ENCODE measurements at regions of chr3 and their contacts with region 1.

Region 1: DNA sequence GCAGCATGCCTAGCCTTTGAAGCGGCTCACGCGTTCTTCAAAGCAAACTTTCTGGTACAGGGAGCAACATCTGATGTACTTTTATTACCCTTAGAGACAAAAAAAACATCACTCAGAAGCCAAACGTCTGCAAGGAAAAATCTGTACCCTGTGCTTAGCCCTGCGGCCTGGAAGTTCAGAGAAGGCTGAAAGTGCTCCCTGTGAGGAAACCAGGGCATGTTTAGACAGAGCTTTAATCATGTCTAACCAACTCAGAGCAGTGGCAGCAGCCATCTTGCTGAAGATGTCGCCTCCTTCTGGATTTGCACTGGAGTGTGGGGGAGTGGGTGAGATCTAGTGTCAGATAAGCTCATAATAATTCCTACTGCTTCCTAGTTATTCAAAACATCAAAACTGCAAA is 170.4 kb downstream of the P3H2 start:
- DNase-seq: no peak
- ATAC-seq: no peak
- H3K4me3 ChIP-seq: no peak overlapping the region
- H3K27ac ChIP-seq: no peak overlapping the region
- H3K4me1 ChIP-seq: peaks cover 0 to 4% (median 0%) of the 10 kb centered on the region in 3 donors
- H3K27me3 ChIP-seq: no peaks in the 10 kb centered on the region
- CTCF ChIP-seq: no peak

Region 2: GRCh38 chr3:189267954-189268613 is 682.2 kb before region 1 on chr3:
- intact Hi-C with region 1: loop called in 1 of 3 experiments (anchors 5 kb)
- DNase-seq: no peak
- ATAC-seq: peak in 2 of 4 donors; percentile 33 to 56
- H3K4me3 ChIP-seq: no peak overlapping the region
- H3K27ac ChIP-seq: no peak overlapping the region
- H3K4me1 ChIP-seq: no peaks in the 10 kb centered on the region
- H3K27me3 ChIP-seq: peaks cover 0 to 5% (median 0%) of the 10 kb centered on the region in 4 donors
- CTCF ChIP-seq: no peak

Region 3: GRCh38 chr3:189995129-189995528 is 44.9 kb after region 1 on chr3:
- intact Hi-C with region 1: no loop called
- DNase-seq: no peak
- ATAC-seq: no peak
- H3K4me3 ChIP-seq: no peak overlapping the region
- H3K27ac ChIP-seq: no peak overlapping the region
- H3K4me1 ChIP-seq: no peaks in the 10 kb centered on the region
- H3K27me3 ChIP-seq: no peaks in the 10 kb centered on the region
- CTCF ChIP-seq: no peak

Measured in pancreas (tissue), 10 donors.